Thyroid gland (tissue), 4 donors: ENCODE measurements at regions of chr4 and their contacts with region 1.

Region 1: DNA sequence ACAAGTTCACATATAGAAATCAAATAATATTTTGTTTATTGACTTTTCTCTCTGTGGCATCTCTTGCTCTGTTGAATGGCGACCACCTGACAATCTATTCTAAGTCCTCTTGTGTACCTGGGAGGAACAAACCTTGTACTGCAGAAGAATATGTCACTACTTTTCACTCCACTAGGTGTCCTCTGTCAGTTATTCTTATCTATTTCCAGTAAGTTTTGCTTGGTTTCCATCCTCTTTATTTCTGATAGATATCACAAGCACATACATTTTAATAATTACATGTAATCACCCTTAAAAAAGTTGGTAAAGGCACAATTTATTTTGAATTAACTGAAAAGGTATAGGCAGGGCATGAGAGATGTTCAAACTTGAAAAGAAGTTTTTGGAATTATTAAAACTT is 238.4 kb downstream of the SNCA start:
- DNase-seq: no peak
- H3K4me3 ChIP-seq: no peak overlapping the region
- H3K27ac ChIP-seq: no peak overlapping the region
- H3K4me1 ChIP-seq: peaks cover 0 to 3% of the 10 kb centered on the region in 2 donors
- H3K27me3 ChIP-seq: no peaks in the 10 kb centered on the region
- CTCF ChIP-seq: peak in 5 of 6 experiments; percentile 10 to 60 (median 45)
- POLR2A ChIP-seq: no peak

Region 2: DNA sequence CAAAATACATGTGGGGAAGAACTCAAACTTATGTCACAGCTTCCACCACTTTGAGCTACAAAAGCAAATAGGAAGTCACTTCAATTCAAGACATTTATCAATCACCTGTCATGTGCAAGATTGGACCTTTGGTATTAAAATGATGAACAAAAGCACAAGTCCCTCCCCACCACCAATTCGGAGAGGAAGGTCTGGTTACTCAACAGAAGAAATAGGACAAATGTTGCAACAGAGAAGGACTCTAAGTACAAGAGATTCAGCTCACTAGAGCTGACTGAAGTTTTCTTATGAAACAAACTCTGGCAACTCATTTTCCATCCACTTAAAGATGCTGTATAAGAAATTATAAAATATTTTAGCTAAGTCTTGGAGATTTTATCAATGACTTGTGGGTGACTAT is 280.0 kb after region 1 on chr4:
- intact Hi-C with region 1: loop called (anchors 10 kb)
- DNase-seq: no peak
- H3K4me3 ChIP-seq: no peak overlapping the region
- H3K27ac ChIP-seq: no peak overlapping the region
- H3K4me1 ChIP-seq: no peaks in the 10 kb centered on the region
- H3K27me3 ChIP-seq: no peaks in the 10 kb centered on the region
- CTCF ChIP-seq: no peak
- POLR2A ChIP-seq: no peak